HepG2 (cell line): ENCODE measurements at regions of chr2 and their contacts with region 1.

Region 1: GRCh38 chr2:237931205-237931721 is 35.6 kb upstream of the UBE2F start:
- DNase-seq: no peak
- ATAC-seq: no peak; the same call in 2 of the 3 replicates
- H3K4me3 ChIP-seq: no peak overlapping the region
- H3K27ac ChIP-seq: no peak overlapping the region
- H3K4me1 ChIP-seq: no peaks in the 10 kb centered on the region
- H3K27me3 ChIP-seq: peaks cover 3 to 21% of the 10 kb centered on the region in 2 experiments; a peak in 4 of 5 replicates
- CTCF ChIP-seq: no peak
- EP300 ChIP-seq: no peak
- POLR2A ChIP-seq: no peak
- RAD21 ChIP-seq: no peak

Region 2: DNA sequence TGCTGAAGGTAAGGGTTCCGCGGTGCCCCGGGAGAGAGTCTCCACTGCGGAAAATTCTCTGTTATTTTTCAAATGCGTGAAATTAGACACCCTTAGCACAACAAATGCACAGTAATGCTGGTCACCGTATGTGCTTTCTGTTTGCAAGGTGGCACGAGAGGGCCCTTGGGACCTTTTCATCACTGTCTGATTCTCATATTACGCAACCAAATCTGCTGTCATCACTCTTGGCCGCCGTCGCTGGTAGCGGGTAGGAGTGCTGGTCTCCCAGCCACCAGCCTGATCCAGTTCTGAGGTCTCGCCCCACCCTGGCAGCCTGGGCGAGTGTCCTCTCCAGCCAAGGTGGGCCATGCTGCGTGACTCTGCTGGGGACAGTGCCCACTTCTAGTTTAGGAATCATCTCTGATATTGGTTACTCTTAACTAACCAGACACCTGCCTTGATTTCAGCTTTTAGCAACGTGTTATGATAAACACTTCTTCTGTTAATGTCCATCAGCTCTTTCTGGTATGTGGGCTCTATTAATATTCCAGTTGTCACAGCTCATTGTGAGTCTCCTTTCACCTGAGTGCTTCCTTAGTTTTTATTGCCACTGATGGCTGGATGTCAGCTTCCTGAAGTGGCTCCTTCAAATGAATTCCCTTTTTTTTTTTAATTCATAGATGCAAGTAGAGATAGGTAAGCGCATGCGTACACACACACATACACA is 1962.5 kb before region 1 on chr2:
- CTCF ChIA-PET with region 1: no interaction called
- POLR2A ChIA-PET with region 1: no interaction called
- in situ Hi-C with region 1: no loop called
- intact Hi-C with region 1: loop called (anchors 10 kb)
- DNase-seq: no peak
- ATAC-seq: no peak
- H3K4me3 ChIP-seq: no peak overlapping the region
- H3K27ac ChIP-seq: no peak overlapping the region
- H3K4me1 ChIP-seq: no peaks in the 10 kb centered on the region
- H3K27me3 ChIP-seq: no peaks in the 10 kb centered on the region
- CTCF ChIP-seq: no peak
- EP300 ChIP-seq: no peak
- POLR2A ChIP-seq: no peak
- RAD21 ChIP-seq: no peak

Region 3: GRCh38 chr2:236871500-236872001 is 1059.7 kb before region 1 on chr2:
- CTCF ChIA-PET with region 1: no interaction called
- POLR2A ChIA-PET with region 1: no interaction called
- in situ Hi-C with region 1: no loop called
- intact Hi-C with region 1: no loop called
- DNase-seq: peak; percentile 5
- ATAC-seq: peak; percentile 28; the same call in 1 of the 3 replicates
- H3K4me3 ChIP-seq: no peak overlapping the region
- H3K27ac ChIP-seq: no peak overlapping the region
- H3K4me1 ChIP-seq: no peaks in the 10 kb centered on the region
- H3K27me3 ChIP-seq: no peaks in the 10 kb centered on the region
- CTCF ChIP-seq: no peak
- EP300 ChIP-seq: peak in 1 of 2 experiments; percentile 15; a peak in 1 of 4 replicates
- POLR2A ChIP-seq: no peak
- RAD21 ChIP-seq: no peak

Region 4: DNA sequence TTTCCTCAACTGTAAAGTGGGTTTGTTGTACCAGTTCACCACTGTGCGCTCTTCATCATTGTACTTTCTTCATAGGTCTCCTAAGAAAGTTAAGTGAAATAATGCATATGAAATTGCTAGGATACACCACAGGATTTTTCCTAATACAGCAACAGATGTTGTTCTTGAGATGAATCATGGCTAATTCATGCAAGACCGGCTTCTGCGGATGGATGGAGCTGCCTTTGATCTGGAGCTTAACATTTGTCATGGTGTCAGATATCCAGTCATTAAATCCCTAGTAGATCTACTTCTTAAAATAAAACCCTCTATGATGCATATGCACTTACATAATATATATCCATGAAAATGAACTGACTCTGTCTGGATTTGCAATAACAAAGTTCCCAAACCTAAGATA is 631.4 kb before region 1 on chr2:
- CTCF ChIA-PET with region 1: no interaction called
- POLR2A ChIA-PET with region 1: no interaction called
- in situ Hi-C with region 1: no loop called
- intact Hi-C with region 1: no loop called
- DNase-seq: no peak
- ATAC-seq: no peak
- H3K4me3 ChIP-seq: no peak overlapping the region
- H3K27ac ChIP-seq: no peak overlapping the region
- H3K4me1 ChIP-seq: peaks cover 6% of the 10 kb centered on the region; the same call in 1 of the 2 replicates
- H3K27me3 ChIP-seq: no peaks in the 10 kb centered on the region
- CTCF ChIP-seq: no peak
- EP300 ChIP-seq: no peak
- POLR2A ChIP-seq: no peak
- RAD21 ChIP-seq: no peak

Region 5: DNA sequence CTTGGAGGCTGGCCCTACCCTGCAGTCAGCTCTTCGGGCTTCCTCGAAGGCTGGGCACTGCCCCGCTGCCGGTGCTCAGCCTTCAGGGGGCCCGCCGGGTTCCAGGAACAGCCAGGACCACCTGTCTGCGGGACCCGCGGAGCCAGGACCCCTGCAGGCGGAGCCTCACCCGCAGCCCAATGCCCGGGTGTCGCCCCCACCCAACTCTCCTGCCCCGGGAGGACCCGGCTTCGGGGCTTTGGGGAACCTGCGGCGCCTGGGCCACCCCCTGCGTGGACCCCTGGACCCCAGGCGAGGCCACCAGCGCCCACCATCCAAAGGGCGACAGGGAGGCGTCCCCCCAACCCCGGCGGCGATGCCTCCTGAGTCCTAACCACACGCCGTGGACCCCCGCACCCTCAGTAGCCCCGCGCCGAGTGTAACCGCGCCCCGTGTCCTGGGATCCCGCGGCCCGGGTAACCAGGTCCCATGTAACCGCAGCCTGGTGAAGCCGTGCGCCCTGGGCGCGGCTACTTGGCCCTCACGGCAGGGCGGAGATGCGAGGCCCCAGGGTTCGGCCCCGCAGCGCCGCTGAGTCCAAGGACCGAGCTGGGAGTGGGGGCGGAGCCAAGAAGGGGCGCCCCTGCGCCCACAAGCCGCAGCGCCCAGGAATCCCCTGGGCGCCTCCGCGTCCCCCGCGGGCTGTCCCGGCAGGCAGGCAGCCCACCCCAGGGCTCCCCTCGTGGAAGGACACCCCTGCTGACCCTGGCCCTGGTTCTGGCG is 24.6 kb after region 1 on chr2:
- CTCF ChIA-PET with region 1: no interaction called
- POLR2A ChIA-PET with region 1: no interaction called
- in situ Hi-C with region 1: no loop called
- intact Hi-C with region 1: no loop called
- DNase-seq: no peak
- ATAC-seq: peak; percentile 64
- H3K4me3 ChIP-seq: peak overlapping the region; percentile 32 to 58 (median 43); a peak in 5 of 6 replicates
- H3K27ac ChIP-seq: no peak overlapping the region
- H3K4me1 ChIP-seq: 0 out of 2 replicates have a peak, but pooled peaks cover 5% of the 10 kb centered on the region
- H3K27me3 ChIP-seq: peaks cover 11 to 55% of the 10 kb centered on the region in 2 experiments
- CTCF ChIP-seq: no peak
- EP300 ChIP-seq: no peak
- POLR2A ChIP-seq: no peak
- RAD21 ChIP-seq: no peak

Region 6: DNA sequence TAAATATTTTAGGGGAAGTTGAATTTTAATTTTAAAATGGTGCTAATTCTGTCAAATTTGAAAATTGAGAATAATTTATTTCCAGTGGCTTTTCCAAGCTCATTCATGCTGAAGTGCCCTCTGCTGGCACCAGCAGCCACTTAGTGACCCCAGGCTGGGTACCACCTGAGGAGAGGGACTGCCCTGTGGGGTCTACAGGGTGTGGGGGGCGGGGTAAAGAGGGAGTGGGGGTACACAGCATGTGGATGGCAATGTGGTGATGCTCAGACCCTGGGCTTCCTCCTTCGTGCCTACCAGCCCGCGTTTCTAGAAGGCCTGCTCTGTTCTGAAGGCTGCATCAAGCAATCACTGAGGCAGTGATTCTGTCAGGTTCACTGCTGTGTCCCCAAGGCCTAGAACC is 84.4 kb after region 1 on chr2:
- CTCF ChIA-PET with region 1: no interaction called
- POLR2A ChIA-PET with region 1: no interaction called
- in situ Hi-C with region 1: no loop called
- intact Hi-C with region 1: no loop called
- DNase-seq: no peak
- ATAC-seq: peak; percentile 35; the same call in 1 of the 3 replicates
- H3K4me3 ChIP-seq: no peak overlapping the region
- H3K27ac ChIP-seq: no peak overlapping the region
- H3K4me1 ChIP-seq: no peaks in the 10 kb centered on the region
- H3K27me3 ChIP-seq: no peaks in the 10 kb centered on the region
- CTCF ChIP-seq: peak; percentile 30; the same call in 1 of the 2 replicates
- EP300 ChIP-seq: no peak
- POLR2A ChIP-seq: no peak
- RAD21 ChIP-seq: no peak